ENCODE measurements at regions of chr2 and their contacts with region 1.

Region 1: GRCh38 chr2:108485253-108485652 is 36.2 kb downstream of the GCC2 start:
- DNase-seq: no peak
- ATAC-seq: no peak
- H3K4me3 ChIP-seq: no peak overlapping the region
- H3K27ac ChIP-seq: no peak overlapping the region
- H3K4me1 ChIP-seq: no peaks in the 10 kb centered on the region
- H3K27me3 ChIP-seq: no peaks in the 10 kb centered on the region
- CTCF ChIP-seq: no peak
- POLR2A ChIP-seq: no peak

Region 2: GRCh38 chr2:108403494-108403893 is 81.8 kb before region 1 on chr2:
- intact Hi-C with region 1: no loop called
- DNase-seq: no peak
- ATAC-seq: no peak
- H3K4me3 ChIP-seq: no peak overlapping the region
- H3K27ac ChIP-seq: no peak overlapping the region
- H3K4me1 ChIP-seq: no peaks in the 10 kb centered on the region
- H3K27me3 ChIP-seq: no peaks in the 10 kb centered on the region
- CTCF ChIP-seq: no peak
- POLR2A ChIP-seq: no peak

Region 3: DNA sequence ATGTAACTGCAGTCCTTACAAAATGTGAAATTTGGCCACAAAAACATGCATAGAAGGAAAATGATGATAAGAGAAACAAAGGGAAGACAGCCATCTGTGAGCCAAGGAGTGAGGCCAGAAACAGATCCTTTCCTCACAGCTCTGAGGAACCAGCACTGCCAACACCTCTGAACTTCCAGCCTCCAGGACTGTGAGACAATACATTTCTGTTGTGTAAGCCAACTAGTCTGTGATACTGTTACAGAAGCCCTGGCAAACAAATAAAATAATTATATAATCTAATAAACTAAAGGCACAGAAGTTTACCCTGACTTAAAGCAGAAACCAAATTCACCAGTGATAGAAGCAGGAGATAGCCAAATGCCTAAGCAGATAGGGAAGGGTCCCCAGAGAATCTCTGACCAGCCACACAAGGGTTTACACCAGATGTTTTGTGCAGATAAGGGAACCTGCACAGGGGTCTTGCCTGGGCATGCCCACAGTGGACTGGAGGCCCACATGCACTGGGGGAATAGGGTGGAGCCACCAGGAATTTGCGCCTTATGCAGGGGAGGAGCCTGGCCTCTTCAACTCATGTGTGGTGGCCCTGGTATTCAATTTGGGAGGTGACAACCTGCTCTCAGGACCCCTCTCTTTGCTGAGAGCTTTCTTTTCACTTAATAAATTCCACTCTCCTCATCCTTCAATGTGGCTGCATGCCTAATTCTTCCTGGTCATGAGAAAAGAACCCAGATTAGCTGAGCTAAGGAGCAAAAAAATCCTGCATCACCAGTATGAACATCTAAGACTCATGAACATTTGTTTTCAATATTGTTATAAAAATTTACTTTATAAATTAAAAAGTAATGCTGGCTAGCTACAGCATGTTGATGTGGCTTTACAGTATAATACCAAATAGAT is 40.1 kb before region 1 on chr2:
- intact Hi-C with region 1: no loop called
- DNase-seq: no peak
- ATAC-seq: no peak
- H3K4me3 ChIP-seq: no peak overlapping the region
- H3K27ac ChIP-seq: no peak overlapping the region
- H3K4me1 ChIP-seq: peaks cover 0 to 15% (median 8%) of the 10 kb centered on the region in 12 donors
- H3K27me3 ChIP-seq: no peaks in the 10 kb centered on the region
- CTCF ChIP-seq: no peak
- POLR2A ChIP-seq: no peak

Region 4: DNA sequence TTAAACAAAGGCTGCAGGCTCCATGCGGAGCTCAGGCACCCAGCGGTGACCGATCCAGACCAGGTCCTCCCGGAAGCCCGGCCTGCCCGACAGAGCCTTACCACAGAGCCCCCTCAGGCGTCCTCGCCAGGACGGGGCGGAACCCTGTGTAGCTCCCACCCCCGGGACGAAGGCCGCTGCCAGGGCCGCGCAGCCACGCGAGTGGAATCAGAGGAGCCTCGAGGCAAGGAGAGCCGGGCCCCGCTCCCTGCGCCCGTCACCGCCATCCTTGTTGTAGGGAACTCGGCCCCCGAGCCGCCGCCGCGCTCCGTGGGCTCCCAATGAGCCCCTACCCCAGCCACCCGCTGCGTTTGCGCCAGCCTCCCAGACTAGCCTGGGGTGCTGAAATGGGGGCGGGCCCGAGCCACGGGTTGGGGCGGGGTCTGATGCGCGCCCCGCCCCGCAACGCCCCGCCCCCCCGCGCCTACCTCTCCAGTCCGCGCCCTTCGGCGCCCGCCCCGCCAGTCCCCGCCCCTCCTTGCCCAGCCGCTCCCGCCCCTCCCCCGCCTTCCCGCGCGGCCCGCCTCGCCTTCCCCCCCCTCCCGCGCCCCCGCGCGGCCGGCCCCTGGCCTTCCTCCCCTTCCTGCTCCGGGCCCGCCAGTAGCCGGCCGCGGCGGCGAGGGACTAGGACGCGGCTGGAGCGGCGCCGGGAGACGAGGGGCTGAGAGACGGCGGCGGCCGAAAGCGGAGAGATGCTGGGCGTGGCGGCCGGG is 48.8 kb after region 1 on chr2 and contains the start of gene LIMS1:
- intact Hi-C with region 1: loop called in 1 of 10 experiments (anchors 5 kb)
- DNase-seq: peak; percentile 94 to 96 (median 95)
- ATAC-seq: peak; percentile 88 to 98 (median 98)
- H3K4me3 ChIP-seq: peak within 1 kb of the TSS; percentile 50 to 98 (median 77)
- H3K27ac ChIP-seq: peak within 1 kb of the TSS; percentile 58 to 94 (median 91)
- H3K4me1 ChIP-seq: peaks cover 0 to 31% (median 15%) of the 10 kb centered on the region in 12 donors
- H3K27me3 ChIP-seq: no peaks in the 10 kb centered on the region
- CTCF ChIP-seq: peak in 3 of 12 donors; percentile 14 to 27 (median 23)
- POLR2A ChIP-seq: peak; percentile 34 to 73
- total RNA-seq, gene LIMS1: 65.8 to 136 (median 82.3) TPM

Region 5: GRCh38 chr2:109079590-109079989 is 594.3 kb after region 1 on chr2:
- intact Hi-C with region 1: no loop called
- DNase-seq: no peak
- ATAC-seq: peak in 1 of 4 donors; percentile 13
- H3K4me3 ChIP-seq: no peak overlapping the region
- H3K27ac ChIP-seq: no peak overlapping the region
- H3K4me1 ChIP-seq: no peaks in the 10 kb centered on the region
- H3K27me3 ChIP-seq: peaks cover 0 to 5% (median 0%) of the 10 kb centered on the region in 9 donors
- CTCF ChIP-seq: no peak
- POLR2A ChIP-seq: no peak